ENCODE measurements at regions of chr10 and their contacts with region 1.

Region 1: GRCh38 chr10:4767033-4767814 is 58.8 kb upstream of the AKR1E2 start:
- DNase-seq: no peak
- ATAC-seq: peak; percentile 50 to 81 (median 72)
- H3K4me3 ChIP-seq: no peak overlapping the region
- H3K27ac ChIP-seq: peak overlapping the region; percentile 61
- H3K4me1 ChIP-seq: peaks cover 74% of the 10 kb centered on the region
- H3K27me3 ChIP-seq: no peaks in the 10 kb centered on the region
- CTCF ChIP-seq: peak; percentile 87

Region 2: GRCh38 chr10:3203016-3203811 is 1564.0 kb before region 1 on chr10:
- intact Hi-C with region 1: loop called in 1 of 2 experiments (anchors 2 kb)
- DNase-seq: no peak
- ATAC-seq: no peak
- H3K4me3 ChIP-seq: no peak overlapping the region
- H3K27ac ChIP-seq: no peak overlapping the region
- H3K4me1 ChIP-seq: no peaks in the 10 kb centered on the region
- H3K27me3 ChIP-seq: no peaks in the 10 kb centered on the region
- CTCF ChIP-seq: no peak

Region 3: DNA sequence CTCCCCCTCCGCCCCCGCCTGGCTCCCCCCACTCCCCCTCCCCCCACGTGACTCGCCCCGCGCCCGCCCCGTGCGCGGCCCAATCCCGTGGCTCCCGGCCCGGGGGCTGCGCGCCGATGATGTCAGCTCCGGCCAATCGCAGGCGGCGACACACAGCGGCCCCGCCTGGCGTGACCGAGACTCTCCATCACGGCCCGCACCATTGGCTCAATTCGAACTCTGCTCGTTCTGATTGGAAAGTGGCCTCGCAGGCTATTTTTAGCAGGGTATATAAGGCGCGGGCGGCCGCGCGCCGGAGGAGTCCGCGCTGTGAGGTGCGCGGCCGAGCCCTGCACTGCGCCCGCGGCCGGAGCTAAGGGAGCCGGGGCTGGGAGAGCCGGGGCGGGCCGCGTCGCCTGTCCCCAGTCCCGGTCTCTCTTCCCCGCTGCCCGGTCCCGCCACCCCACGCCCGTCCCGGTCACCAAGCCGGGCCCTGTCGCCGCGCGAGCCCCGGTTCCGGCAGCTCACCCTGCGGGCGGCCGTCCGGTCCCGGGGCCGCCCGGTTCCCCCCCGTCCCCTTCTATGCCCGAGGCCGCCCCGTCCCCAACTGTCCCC is 981.9 kb before region 1 on chr10:
- intact Hi-C with region 1: loop called in 1 of 2 experiments (anchors 10 kb)
- DNase-seq: peak; percentile 99 to 100
- ATAC-seq: peak; percentile 69 to 84 (median 78)
- H3K4me3 ChIP-seq: peak overlapping the region; percentile 95
- H3K27ac ChIP-seq: peak overlapping the region; percentile 100
- H3K4me1 ChIP-seq: peaks cover 10% of the 10 kb centered on the region
- H3K27me3 ChIP-seq: no peaks in the 10 kb centered on the region
- CTCF ChIP-seq: no peak

Region 4: GRCh38 chr10:4344511-4344994 is 422.7 kb before region 1 on chr10:
- intact Hi-C with region 1: loop called in 1 of 2 experiments (anchors 10 kb)
- DNase-seq: peak; percentile 73 to 85
- ATAC-seq: peak; percentile 96 to 99 (median 97)
- H3K4me3 ChIP-seq: peak overlapping the region; percentile 16
- H3K27ac ChIP-seq: peak overlapping the region; percentile 80
- H3K4me1 ChIP-seq: peaks cover 31% of the 10 kb centered on the region
- H3K27me3 ChIP-seq: no peaks in the 10 kb centered on the region
- CTCF ChIP-seq: peak; percentile 9

Region 5: GRCh38 chr10:4663162-4663904 is 103.9 kb before region 1 on chr10:
- intact Hi-C with region 1: loop called (anchors 2 to 5 kb)
- DNase-seq: peak; percentile 52 to 70
- ATAC-seq: peak; percentile 81 to 91 (median 85)
- H3K4me3 ChIP-seq: peak overlapping the region; percentile 55
- H3K27ac ChIP-seq: peak overlapping the region; percentile 91
- H3K4me1 ChIP-seq: peaks cover 38% of the 10 kb centered on the region
- H3K27me3 ChIP-seq: no peaks in the 10 kb centered on the region
- CTCF ChIP-seq: no peak

Measured in psoas muscle (tissue), 8 donors.